ENCODE measurements at regions of chr10 and their contacts with region 1.

Region 1: DNA sequence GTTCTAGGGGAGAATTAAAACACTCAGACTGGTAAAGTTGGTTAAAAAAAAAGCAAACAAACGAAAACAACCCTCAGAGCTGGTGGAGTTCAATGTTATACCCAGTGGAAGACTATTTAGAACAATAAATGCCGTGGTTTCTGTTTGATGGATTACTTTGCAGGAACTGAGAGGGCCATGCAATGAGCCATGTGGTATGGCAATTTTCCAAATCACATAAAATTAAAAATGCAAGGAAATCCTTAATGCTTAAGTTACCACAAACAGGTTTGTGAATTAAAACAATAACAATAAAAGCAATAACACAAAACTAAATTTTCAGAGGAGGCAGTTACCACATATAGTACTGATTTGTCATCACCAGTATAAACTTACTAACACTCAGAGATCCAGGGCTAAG is 96.9 kb downstream of the RTKN2 start:
- DNase-seq: no peak
- ATAC-seq: no peak
- H3K4me3 ChIP-seq: no peak overlapping the region
- H3K4me3 Mint-ChIP-seq: no peak overlapping the region
- H3K27ac ChIP-seq: no peak overlapping the region
- H3K27ac Mint-ChIP-seq: no peak overlapping the region
- H3K4me1 ChIP-seq: peaks cover 14 to 16% of the 10 kb centered on the region in 2 donors
- H3K4me1 Mint-ChIP-seq: peaks cover 21% of the 10 kb centered on the region
- H3K27me3 ChIP-seq: no peaks in the 10 kb centered on the region
- H3K27me3 Mint-ChIP-seq: no peaks in the 10 kb centered on the region
- CTCF ChIP-seq: no peak

Region 2: GRCh38 chr10:62136899-62137298 is 34.9 kb before region 1 on chr10:
- CTCF ChIA-PET with region 1: no interaction called
- POLR2A ChIA-PET with region 1: no interaction called
- intact Hi-C with region 1: loop called (anchors 5 kb)
- DNase-seq: no peak
- ATAC-seq: no peak
- H3K4me3 ChIP-seq: no peak overlapping the region
- H3K4me3 Mint-ChIP-seq: no peak overlapping the region
- H3K27ac ChIP-seq: no peak overlapping the region
- H3K27ac Mint-ChIP-seq: no peak overlapping the region
- H3K4me1 ChIP-seq: no peaks in the 10 kb centered on the region
- H3K4me1 Mint-ChIP-seq: no peaks in the 10 kb centered on the region
- H3K27me3 ChIP-seq: no peaks in the 10 kb centered on the region
- H3K27me3 Mint-ChIP-seq: no peaks in the 10 kb centered on the region
- CTCF ChIP-seq: no peak